Activated T-helper 2 cell treated with anti-CD3 and anti-CD28 coated beads, Interferon-gamma antibody, Interleukin-2, Interleukin-4, amounts not matched to agents 10 μg/mL and 5 μg/mL and 100 μg/mL, durations not matched to agents 14 hours and 24 hours and 36 hours (primary cell): ENCODE measurements at regions of chr5 and their contacts with region 1.

Region 1: GRCh38 chr5:173228639-173229381 is 6.2 kb downstream of the NKX2-5 start:
- DNase-seq: no peak
- H3K4me3 Mint-ChIP-seq: no peak overlapping the region
- H3K27ac Mint-ChIP-seq: no peak overlapping the region
- H3K4me1 Mint-ChIP-seq: peaks cover 7% of the 10 kb centered on the region
- H3K27me3 Mint-ChIP-seq: peaks cover 67% of the 10 kb centered on the region

Region 2: GRCh38 chr5:172920447-172920849 is 308.4 kb before region 1 on chr5:
- intact Hi-C with region 1: no loop called
- DNase-seq: no peak
- H3K4me3 Mint-ChIP-seq: no peak overlapping the region
- H3K27ac Mint-ChIP-seq: no peak overlapping the region
- H3K4me1 Mint-ChIP-seq: no peaks in the 10 kb centered on the region
- H3K27me3 Mint-ChIP-seq: no peaks in the 10 kb centered on the region

Region 3: GRCh38 chr5:173245319-173246134 is 16.7 kb after region 1 on chr5:
- intact Hi-C with region 1: loop called (anchors 2 kb)
- DNase-seq: no peak
- H3K4me3 Mint-ChIP-seq: no peak overlapping the region
- H3K27ac Mint-ChIP-seq: no peak overlapping the region
- H3K4me1 Mint-ChIP-seq: no peaks in the 10 kb centered on the region
- H3K27me3 Mint-ChIP-seq: peaks cover 86% of the 10 kb centered on the region